Colonic mucosa (tissue), 4 donors: ENCODE measurements at regions of chr2 and their contacts with region 1.

Region 1: DNA sequence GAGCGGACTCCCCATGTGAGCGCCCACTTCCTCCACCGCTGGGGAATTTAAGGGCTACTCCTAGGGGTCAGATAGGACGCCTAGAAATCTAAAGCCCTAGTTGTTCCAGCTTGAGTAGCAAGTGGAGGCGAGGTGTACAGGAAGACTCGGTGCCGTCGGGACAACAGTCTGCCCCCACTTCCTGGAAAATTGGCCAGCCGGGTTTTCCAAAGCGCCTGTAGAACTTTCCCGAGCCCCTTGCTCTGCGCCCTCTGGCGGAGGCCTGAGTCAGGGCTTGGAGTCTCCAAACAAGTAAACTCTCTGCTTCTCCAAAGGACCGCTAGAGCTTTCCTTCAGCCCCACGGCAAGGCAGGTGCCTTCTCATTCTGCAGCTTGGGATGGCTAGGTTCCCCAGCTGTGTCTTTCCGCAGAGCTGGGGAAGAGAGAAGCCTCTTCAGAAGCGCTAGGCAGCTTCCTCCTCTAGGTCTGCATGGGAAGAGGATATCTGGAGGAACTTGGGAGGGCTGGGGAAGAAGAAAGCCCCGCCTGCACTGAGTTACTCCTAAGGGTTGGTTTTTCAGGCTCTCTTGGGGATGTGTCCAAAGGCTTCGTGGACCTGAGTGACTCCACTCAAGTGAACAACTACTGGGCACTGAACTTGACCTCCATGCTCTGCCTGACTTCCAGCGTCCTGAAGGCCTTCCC is 688 bp downstream of the SPR start:
- DNase-seq: peak; percentile 95
- H3K4me3 ChIP-seq: peak overlapping the region; percentile 83
- H3K27ac ChIP-seq: peak overlapping the region; percentile 95
- H3K4me1 ChIP-seq: peaks cover 21% of the 10 kb centered on the region
- H3K27me3 ChIP-seq: no peaks in the 10 kb centered on the region
- CTCF ChIP-seq: peak; percentile 85

Region 2: GRCh38 chr2:72439892-72440291 is 448.0 kb before region 1 on chr2:
- intact Hi-C with region 1: no loop called
- DNase-seq: no peak
- H3K4me3 ChIP-seq: no peak overlapping the region
- H3K27ac ChIP-seq: no peak overlapping the region
- H3K4me1 ChIP-seq: no peaks in the 10 kb centered on the region
- H3K27me3 ChIP-seq: no peaks in the 10 kb centered on the region
- CTCF ChIP-seq: no peak

Region 3: DNA sequence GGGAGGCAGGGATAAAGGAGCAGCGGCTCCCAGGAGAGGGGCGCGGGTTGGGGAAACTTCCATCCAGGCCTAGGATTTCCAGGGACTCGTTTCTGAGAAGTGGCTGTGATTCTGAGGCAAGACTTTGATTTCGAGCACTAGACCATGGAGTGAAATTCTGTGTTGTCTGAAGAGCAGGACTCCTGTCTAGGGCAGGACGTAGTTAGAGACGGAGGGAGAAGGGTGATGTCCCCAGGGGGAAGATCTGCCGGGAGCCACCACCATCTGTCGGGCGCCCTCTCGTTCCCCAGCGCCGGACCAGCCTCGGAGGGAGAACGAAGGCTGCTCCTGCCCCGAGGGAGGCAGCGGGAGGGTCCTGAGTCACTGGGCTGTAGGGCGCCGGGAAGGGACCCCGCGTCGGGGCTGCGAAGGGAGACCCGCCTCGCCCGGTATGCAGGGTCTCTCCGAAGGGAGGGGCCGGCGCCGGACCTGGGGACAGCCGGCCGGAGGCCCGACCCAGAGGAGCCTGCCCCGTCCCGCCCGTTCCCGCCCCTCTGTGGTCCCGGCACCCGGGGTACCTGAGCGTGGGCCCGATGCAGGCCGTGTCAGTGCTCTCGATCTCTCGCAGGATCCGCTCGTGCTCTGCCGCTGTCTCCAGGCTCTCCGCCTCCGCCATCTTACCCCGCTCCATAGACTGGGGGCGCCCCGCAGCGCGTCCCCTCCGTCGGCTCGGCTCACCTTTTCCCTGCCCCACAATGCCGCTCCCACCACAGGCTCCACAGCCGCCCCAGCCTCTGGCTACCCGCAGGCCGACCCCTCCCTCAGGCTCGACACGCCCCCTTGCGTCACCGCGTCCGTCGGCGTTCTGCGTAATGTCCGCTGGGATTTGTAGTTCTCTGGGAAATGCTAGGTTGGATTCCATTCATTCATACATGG is 62.4 kb before region 1 on chr2 and contains the start of gene EXOC6B:
- intact Hi-C with region 1: no loop called
- DNase-seq: peak; percentile 96
- H3K4me3 ChIP-seq: peak within 1 kb of the TSS; percentile 99
- H3K27ac ChIP-seq: peak within 1 kb of the TSS; percentile 73
- H3K4me1 ChIP-seq: peaks cover 5% of the 10 kb centered on the region
- H3K27me3 ChIP-seq: no peaks in the 10 kb centered on the region
- CTCF ChIP-seq: no peak
- total RNA-seq, gene EXOC6B: 21.3 to 28.8 TPM

Region 4: GRCh38 chr2:72934683-72935610 is 47.1 kb after region 1 on chr2:
- intact Hi-C with region 1: loop called (anchors 5 kb)
- DNase-seq: peak; percentile 54
- H3K4me3 ChIP-seq: no peak overlapping the region
- H3K27ac ChIP-seq: no peak overlapping the region
- H3K4me1 ChIP-seq: no peaks in the 10 kb centered on the region
- H3K27me3 ChIP-seq: no peaks in the 10 kb centered on the region
- CTCF ChIP-seq: peak; percentile 35

Region 5: DNA sequence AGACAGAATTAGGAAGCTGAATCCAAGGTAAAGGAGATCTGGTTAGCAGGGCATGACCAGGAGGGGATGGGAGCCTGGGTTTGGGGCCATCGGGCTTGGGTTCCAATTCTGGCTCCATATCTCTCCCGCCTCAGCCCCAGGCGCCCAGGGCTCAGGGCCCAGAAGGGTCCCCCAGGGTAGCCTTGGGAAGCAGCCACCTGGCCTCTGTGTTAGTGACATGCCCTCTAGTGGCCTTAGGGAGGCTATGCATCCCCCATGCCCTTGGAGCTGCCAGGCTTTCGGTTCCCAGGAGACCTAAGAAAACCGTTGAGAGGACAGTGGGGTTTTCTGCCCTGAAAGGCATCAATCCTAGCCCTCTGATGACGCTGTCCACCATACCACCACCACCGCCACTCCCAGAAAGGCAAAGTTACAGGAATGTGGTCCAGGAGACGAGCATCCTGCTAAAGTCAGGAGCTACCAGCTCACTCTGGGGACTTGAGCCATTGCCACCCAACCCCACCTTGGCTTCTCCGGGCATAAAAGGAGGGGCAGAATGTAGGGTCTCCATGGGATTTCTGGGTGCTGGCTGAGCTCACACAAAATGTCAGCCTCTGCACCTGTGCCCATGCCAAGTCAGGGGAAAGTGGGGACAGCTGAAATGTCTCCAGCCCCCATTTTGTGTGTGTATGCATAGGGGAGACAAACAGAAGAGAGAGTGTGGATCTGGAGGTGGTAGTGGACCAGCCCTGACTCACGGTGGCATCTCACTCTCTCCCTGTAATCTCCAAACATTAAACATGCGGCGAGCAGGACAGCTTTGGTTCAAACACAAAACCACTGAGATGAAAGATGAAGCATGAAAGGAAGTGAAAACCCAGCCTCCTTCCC is 85.9 kb after region 1 on chr2:
- intact Hi-C with region 1: loop called (anchors 2 kb)
- DNase-seq: peak; percentile 31
- H3K4me3 ChIP-seq: no peak overlapping the region
- H3K27ac ChIP-seq: no peak overlapping the region
- H3K4me1 ChIP-seq: no peaks in the 10 kb centered on the region
- H3K27me3 ChIP-seq: no peaks in the 10 kb centered on the region
- CTCF ChIP-seq: peak; percentile 73

Region 6: DNA sequence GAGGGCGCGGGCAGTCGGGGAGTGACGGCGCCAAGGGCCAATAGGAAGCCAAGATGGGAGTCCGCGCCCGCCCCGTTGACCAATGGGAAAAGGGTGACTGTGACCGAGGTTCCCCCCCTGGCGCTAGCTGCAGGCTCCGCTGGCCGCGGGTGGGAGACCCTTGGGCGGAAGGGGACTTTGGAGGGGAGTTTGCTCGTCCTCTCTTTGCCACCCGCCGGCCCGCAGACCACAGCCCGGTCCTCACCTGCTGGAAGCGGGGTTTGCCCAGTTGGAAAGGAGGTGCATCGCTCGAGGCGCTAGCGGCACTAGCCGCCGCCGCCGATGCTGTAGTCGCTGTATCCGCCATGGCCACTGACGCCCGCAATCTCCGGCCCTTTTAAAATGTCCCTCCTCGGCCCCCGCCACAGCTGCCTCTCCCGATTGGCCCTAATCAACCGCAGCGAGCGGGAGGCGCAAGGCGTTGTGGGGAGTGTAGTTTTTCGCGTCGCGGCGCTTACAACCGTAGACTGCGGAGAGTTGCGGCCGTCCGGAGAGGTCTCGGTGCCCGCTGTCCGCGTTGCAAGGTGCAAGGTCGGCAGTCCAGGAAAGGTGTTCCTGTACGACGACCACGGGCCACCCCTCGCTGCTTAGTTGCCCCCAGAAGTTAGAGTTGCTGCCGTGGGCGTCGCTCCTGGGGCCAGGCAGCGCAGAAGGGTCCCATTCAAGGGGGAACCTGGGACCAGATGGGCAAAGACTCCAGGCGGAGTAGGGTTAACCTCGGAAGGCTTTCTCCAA is 183.7 kb after region 1 on chr2 and contains the start of gene SFXN5:
- intact Hi-C with region 1: loop called (anchors 5 kb)
- DNase-seq: peak; percentile 99
- H3K4me3 ChIP-seq: peak within 1 kb of the TSS; percentile 83
- H3K27ac ChIP-seq: peak within 1 kb of the TSS; percentile 93
- H3K4me1 ChIP-seq: peaks cover 3% of the 10 kb centered on the region
- H3K27me3 ChIP-seq: no peaks in the 10 kb centered on the region
- CTCF ChIP-seq: no peak
- total RNA-seq, gene SFXN5: 16.1 to 26.4 TPM

Region 7: GRCh38 chr2:73163483-73164367 is 275.8 kb after region 1 on chr2:
- intact Hi-C with region 1: loop called (anchors 5 kb)
- DNase-seq: peak; percentile 62
- H3K4me3 ChIP-seq: no peak overlapping the region
- H3K27ac ChIP-seq: no peak overlapping the region
- H3K4me1 ChIP-seq: no peaks in the 10 kb centered on the region
- H3K27me3 ChIP-seq: no peaks in the 10 kb centered on the region
- CTCF ChIP-seq: peak; percentile 85

Region 8: GRCh38 chr2:73176881-73177644 is 289.2 kb after region 1 on chr2:
- intact Hi-C with region 1: loop called (anchors 5 kb)
- DNase-seq: peak; percentile 93
- H3K4me3 ChIP-seq: peak overlapping the region; percentile 51
- H3K27ac ChIP-seq: peak overlapping the region; percentile 21
- H3K4me1 ChIP-seq: no peaks in the 10 kb centered on the region
- H3K27me3 ChIP-seq: peaks cover 18% of the 10 kb centered on the region
- CTCF ChIP-seq: peak; percentile 99